ENCODE measurements at regions of chr3 and their contacts with region 1.

Region 1: GRCh38 chr3:131794766-131795388 is 239.9 kb downstream of the CPNE4 start:
- DNase-seq: peak; percentile 27 to 54
- H3K4me3 ChIP-seq: no peak overlapping the region
- H3K27ac ChIP-seq: no peak overlapping the region
- H3K4me1 ChIP-seq: peaks cover 2 to 16% (median 13%) of the 10 kb centered on the region in 4 experiments; a peak in 5 of 7 replicates
- H3K27me3 ChIP-seq: no peaks in the 10 kb centered on the region
- CTCF ChIP-seq: peak; percentile 54 to 98 (median 90)
- EP300 ChIP-seq: no peak
- POLR2A ChIP-seq: no peak
- RAD21 ChIP-seq: peak; percentile 91 to 93

Region 2: GRCh38 chr3:131349946-131350347 is 444.9 kb before region 1 on chr3:
- CTCF ChIA-PET with region 1: no interaction called
- POLR2A ChIA-PET with region 1: no interaction called
- DNase-seq: no peak
- H3K4me3 ChIP-seq: no peak overlapping the region
- H3K27ac ChIP-seq: no peak overlapping the region
- H3K4me1 ChIP-seq: peaks cover 4 to 14% (median 8%) of the 10 kb centered on the region in 4 experiments; a peak in 5 of 7 replicates
- H3K27me3 ChIP-seq: no peaks in the 10 kb centered on the region
- CTCF ChIP-seq: no peak
- EP300 ChIP-seq: no peak
- POLR2A ChIP-seq: no peak
- RAD21 ChIP-seq: no peak

Region 3: DNA sequence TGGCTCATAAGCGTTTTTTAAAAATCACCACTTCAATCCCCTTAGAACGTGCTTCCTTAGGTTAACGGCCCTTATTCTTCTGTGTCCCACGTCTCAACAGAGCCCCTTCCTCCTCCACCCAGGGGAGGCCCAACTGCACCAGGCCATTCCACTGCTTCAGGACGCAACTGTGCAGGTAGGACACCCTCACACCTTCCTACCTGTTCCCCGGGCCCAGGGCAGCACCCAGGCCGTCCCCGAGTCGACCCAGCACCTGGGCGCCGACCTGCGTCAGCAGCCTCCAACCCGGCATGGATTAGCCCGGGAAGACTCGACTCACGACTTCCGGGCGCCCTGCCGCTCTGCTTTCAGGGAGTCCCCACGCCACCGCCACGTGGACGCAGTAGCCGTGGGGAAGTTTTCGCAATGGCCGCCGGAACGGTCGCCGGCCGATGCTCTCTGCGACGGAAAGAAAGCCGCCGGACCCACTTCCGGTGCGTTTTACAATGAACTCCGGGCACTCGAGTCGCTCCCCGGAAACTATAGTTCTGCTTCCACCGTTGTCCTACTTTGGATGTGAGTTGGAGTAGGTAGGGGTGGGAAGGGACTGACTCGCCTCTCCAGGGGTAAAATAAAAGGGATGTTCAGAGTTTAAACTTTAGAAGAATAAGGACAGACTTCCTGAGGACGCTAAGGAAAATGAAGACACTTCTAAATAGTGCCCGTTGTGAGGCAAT is 292.2 kb before region 1 on chr3 and contains the start of gene MRPL3:
- CTCF ChIA-PET with region 1: no interaction called
- POLR2A ChIA-PET with region 1: no interaction called
- DNase-seq: peak; percentile 70 to 86
- H3K4me3 ChIP-seq: peak within 1 kb of the TSS; percentile 91 to 97 (median 95)
- H3K27ac ChIP-seq: peak within 1 kb of the TSS; percentile 94
- H3K4me1 ChIP-seq: no peaks in the 10 kb centered on the region
- H3K27me3 ChIP-seq: peaks cover 0 to 16% (median 8%) of the 10 kb centered on the region in 4 experiments; a peak in 6 of 7 replicates
- CTCF ChIP-seq: no peak
- EP300 ChIP-seq: peak in 1 of 2 experiments; percentile 67; a peak in 1 of 3 replicates
- POLR2A ChIP-seq: peak; percentile 81 to 83
- RAD21 ChIP-seq: peak in 1 of 2 experiments; percentile 12; a peak in 1 of 4 replicates
- total RNA-seq, gene MRPL3: 164 and 175 TPM in 2 replicates

Region 4: DNA sequence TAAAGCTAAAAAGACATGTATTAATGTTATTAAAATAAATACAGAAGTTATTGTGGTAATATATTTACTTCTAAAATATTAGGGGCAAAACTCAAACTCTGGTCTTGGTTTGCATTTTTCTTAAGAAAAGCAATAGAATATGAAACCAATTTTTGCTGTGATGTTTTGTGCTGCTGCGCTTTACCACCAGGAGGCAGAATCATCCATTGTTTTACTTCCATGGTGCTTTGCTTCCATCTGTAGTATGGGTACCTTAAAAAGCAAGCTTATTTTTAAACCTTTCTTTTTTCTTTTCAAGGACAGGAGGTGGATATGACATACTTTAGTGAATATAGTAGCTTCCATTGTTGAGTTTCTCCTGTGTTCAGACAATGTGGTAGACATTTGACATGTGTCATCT is 245.5 kb before region 1 on chr3:
- CTCF ChIA-PET with region 1: interaction called, 11 read pairs
- POLR2A ChIA-PET with region 1: no interaction called
- DNase-seq: no peak
- H3K4me3 ChIP-seq: no peak overlapping the region
- H3K27ac ChIP-seq: no peak overlapping the region
- H3K4me1 ChIP-seq: peaks cover 0 to 2% (median 0%) of the 10 kb centered on the region in 4 experiments; a peak in 1 of 7 replicates
- H3K27me3 ChIP-seq: no peaks in the 10 kb centered on the region
- CTCF ChIP-seq: peak in 2 of 3 experiments; percentile 57 to 73; a peak in 2 of 4 replicates
- EP300 ChIP-seq: no peak
- POLR2A ChIP-seq: no peak
- RAD21 ChIP-seq: peak; percentile 73 to 76

Region 5: GRCh38 chr3:131812421-131812820 is 17.5 kb after region 1 on chr3:
- CTCF ChIA-PET with region 1: interaction called, 43 read pairs
- POLR2A ChIA-PET with region 1: no interaction called
- DNase-seq: no peak
- H3K4me3 ChIP-seq: no peak overlapping the region
- H3K27ac ChIP-seq: no peak overlapping the region
- H3K4me1 ChIP-seq: peaks cover 0 to 3% (median 0%) of the 10 kb centered on the region in 4 experiments; a peak in 2 of 7 replicates
- H3K27me3 ChIP-seq: no peaks in the 10 kb centered on the region
- CTCF ChIP-seq: no peak
- EP300 ChIP-seq: no peak
- POLR2A ChIP-seq: no peak
- RAD21 ChIP-seq: no peak

Region 6: GRCh38 chr3:131883086-131883485 is 88.2 kb after region 1 on chr3:
- CTCF ChIA-PET with region 1: no interaction called
- POLR2A ChIA-PET with region 1: no interaction called
- DNase-seq: no peak
- H3K4me3 ChIP-seq: no peak overlapping the region
- H3K27ac ChIP-seq: no peak overlapping the region
- H3K4me1 ChIP-seq: no peaks in the 10 kb centered on the region
- H3K27me3 ChIP-seq: no peaks in the 10 kb centered on the region
- CTCF ChIP-seq: no peak
- EP300 ChIP-seq: no peak
- POLR2A ChIP-seq: no peak
- RAD21 ChIP-seq: no peak

Region 7: GRCh38 chr3:132016061-132017041 is 221.5 kb after region 1 on chr3:
- CTCF ChIA-PET with region 1: interaction called, 83 read pairs
- POLR2A ChIA-PET with region 1: no interaction called
- DNase-seq: no peak
- H3K4me3 ChIP-seq: no peak overlapping the region
- H3K27ac ChIP-seq: no peak overlapping the region
- H3K4me1 ChIP-seq: peaks cover 0 to 4% (median 1%) of the 10 kb centered on the region in 4 experiments; a peak in 2 of 7 replicates
- H3K27me3 ChIP-seq: no peaks in the 10 kb centered on the region
- CTCF ChIP-seq: no peak
- EP300 ChIP-seq: no peak
- POLR2A ChIP-seq: no peak
- RAD21 ChIP-seq: no peak

Region 8: DNA sequence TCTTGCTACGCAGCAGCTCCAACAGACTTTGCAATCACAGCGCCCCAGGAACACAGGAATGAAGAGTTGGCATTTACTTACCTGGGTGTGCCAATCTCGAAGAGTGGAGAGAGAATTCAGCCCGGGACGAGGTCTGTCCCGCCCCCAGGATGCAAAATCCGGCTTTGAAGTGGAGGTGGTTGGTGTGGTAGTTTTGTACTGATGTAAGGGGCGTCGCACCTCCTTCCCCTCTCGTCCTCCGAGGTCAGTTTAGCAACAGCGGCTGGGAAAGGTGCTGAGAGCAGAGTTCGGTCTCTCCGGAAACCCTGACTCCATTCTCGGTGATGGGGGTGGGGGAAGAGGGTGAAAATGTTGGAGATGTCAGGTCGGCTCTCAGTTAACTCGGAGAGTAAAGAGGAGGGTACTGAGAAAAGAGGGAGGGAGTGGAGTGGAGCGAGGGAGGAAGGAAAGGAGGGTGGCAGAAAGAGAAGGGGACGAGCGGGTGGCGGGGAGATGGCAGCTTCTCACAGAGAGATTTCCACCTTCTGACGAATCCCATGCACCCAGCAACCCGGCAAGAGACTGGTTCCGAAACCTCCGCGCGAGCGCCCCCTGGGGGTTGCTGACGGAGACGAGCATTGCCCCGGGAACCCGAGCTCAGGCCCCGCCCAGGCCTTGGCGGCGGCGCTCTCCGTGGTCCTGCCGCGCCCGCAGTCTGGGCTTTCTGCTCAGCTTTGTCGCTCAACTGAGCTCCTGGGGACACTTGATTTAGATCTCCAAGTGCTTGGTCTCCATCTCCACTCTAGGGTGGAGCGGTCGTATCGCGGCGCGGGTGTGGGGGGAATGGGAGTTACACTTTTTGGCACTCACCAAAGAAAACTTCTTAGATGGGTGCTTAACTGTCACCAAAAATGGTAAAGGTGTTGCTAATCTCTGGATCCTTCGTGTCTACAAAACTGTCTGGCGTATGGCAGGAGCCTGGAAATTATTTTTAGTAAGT is 239.9 kb after region 1 on chr3 and contains the start of gene CPNE4:
- CTCF ChIA-PET with region 1: interaction called, 76 read pairs
- POLR2A ChIA-PET with region 1: no interaction called
- DNase-seq: peak; percentile 77 to 100
- H3K4me3 ChIP-seq: peak within 1 kb of the TSS; percentile 46 to 79 (median 70)
- H3K27ac ChIP-seq: no peak within 1 kb of the TSS
- H3K4me1 ChIP-seq: no peaks in the 10 kb centered on the region; a peak in 2 of 7 replicates
- H3K27me3 ChIP-seq: peaks cover 0 to 20% (median 8%) of the 10 kb centered on the region in 4 experiments; a peak in 6 of 7 replicates
- CTCF ChIP-seq: peak; percentile 77 to 91 (median 88)
- EP300 ChIP-seq: no peak
- POLR2A ChIP-seq: no peak; a peak in 1 of 3 replicates
- RAD21 ChIP-seq: peak; percentile 67 to 77
- total RNA-seq, gene CPNE4: 1.9 and 3.8 TPM in 2 replicates

Region 9: DNA sequence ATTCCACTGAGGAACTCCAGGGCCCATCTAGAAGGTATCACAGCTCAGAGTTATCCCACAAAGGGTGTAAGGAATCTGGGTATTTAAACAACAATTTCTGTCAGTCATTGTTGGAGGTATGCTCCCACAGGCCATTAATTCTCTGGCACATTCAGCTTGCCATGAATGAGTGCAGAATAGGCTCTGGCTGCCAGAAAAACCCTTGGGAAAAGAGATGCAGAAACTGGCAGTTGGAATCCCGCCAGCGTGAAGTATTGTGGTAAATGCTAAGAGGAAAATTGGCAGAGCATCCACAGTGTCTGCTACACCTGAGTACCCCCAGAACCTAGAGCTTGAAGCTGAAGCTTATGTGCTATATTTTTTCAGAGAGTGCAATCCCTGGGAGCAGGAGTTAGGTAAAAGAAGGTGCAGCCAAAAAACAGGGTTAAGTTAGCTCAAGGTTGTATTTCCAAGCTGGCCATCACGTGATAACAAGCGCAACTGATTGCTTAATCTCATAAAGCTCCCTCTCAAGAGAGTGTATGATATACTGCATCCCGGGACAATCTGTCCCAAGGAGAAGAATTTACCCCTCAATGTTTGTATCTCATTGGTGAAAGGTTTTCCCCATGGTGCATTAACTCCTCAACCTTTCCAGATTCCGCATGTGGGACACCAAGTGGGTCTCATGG is 428.1 kb after region 1 on chr3:
- CTCF ChIA-PET with region 1: interaction called, 12 read pairs
- POLR2A ChIA-PET with region 1: no interaction called
- DNase-seq: no peak
- H3K4me3 ChIP-seq: no peak overlapping the region
- H3K27ac ChIP-seq: no peak overlapping the region
- H3K4me1 ChIP-seq: peaks cover 0 to 8% (median 5%) of the 10 kb centered on the region in 4 experiments; a peak in 4 of 7 replicates
- H3K27me3 ChIP-seq: no peaks in the 10 kb centered on the region
- CTCF ChIP-seq: no peak
- EP300 ChIP-seq: no peak
- POLR2A ChIP-seq: no peak
- RAD21 ChIP-seq: no peak